ENCODE measurements at regions of chr1 and their contacts with region 1.

Region 1: GRCh38 chr1:21963477-21964217 is 13.2 kb upstream of the CELA3B start:
- DNase-seq: peak; percentile 57
- ATAC-seq: peak; percentile 88
- H3K4me3 ChIP-seq: no peak overlapping the region
- H3K27ac ChIP-seq: no peak overlapping the region
- H3K4me1 ChIP-seq: peaks cover 3% of the 10 kb centered on the region; the same call in 1 of the 2 replicates
- H3K27me3 ChIP-seq: no peaks in the 10 kb centered on the region
- CTCF ChIP-seq: peak; percentile 84
- POLR2A ChIP-seq: peak; percentile 30; the same call in 1 of the 2 replicates
- RAD21 ChIP-seq: peak; percentile 93

Region 2: DNA sequence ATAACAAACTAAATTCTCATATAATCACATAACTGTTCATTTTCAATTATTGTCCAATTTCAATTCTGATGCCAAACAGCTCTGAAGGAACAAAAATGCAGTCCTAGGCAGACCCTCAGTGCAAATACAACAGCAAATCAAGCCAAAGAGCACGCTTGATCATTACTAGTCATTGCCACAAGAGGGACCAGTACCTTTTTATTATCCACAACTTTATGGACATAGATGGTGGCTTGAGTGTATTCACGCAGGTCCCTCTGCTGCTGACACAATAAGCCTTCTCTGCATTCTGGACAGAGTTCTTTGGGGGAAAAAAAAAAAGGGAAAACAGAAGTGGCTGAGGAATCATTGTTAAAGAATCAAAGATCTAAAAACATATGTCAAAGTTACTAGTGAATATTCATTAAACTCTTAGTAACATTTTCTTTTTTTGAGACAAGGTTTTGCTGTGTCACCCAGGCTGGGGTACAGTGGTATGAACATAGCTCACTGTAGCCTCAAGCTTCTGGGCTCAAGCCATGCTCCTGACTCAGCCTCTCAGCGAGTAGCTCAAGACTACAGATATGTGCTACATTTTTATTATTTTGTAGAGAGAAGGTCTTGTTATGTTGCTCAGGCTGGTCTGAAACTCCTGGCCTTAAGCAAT is 260.2 kb before region 1 on chr1:
- CTCF ChIA-PET with region 1: no interaction called
- POLR2A ChIA-PET with region 1: no interaction called
- dilution Hi-C with region 1: no loop called
- in situ Hi-C with region 1: loop called (anchors 25 kb)
- intact Hi-C with region 1: loop called (anchors 10 kb)
- DNase-seq: peak; percentile 88
- ATAC-seq: peak; percentile 89
- H3K4me3 ChIP-seq: no peak overlapping the region
- H3K27ac ChIP-seq: no peak overlapping the region
- H3K4me1 ChIP-seq: peaks cover 10% of the 10 kb centered on the region
- H3K27me3 ChIP-seq: no peaks in the 10 kb centered on the region
- CTCF ChIP-seq: peak; percentile 40
- POLR2A ChIP-seq: no peak
- RAD21 ChIP-seq: peak; percentile 27

Region 3: DNA sequence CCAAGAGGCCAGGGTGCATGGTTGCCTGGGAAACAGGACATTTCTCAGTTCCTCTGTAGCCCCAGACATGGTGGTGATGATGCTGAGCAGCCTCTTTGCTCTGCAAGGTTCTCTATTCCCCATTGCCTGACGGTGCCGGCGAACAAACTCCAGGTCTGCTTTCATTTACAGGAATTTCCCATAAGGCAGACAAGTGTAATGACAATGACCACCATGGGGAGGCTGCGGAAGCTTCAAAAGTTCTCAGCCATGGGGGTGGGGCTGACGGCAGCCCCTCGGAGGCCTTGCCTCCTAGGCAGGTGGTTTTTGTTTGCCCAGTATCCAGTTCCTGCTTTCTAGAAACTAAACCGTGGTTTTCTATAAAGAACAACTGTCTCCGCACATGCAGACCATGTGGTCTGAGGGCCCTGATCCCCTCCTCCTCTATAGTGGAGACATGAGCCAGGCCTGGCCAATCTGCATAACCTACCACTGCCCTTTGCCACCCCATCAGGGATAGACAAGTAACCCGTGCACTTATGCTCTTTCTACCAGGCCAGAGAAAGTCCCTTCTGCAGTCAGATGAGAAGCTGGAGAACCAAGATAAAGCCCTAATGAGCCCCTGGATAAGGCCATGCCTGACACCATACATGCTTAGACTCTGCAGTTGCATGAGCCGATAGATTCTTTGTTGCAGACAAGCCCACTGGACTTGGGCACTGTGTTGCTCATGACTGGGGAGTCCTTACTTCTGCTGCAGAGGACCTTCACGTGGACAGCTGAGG is 97.5 kb before region 1 on chr1:
- CTCF ChIA-PET with region 1: no interaction called
- POLR2A ChIA-PET with region 1: no interaction called
- dilution Hi-C with region 1: no loop called
- in situ Hi-C with region 1: no loop called
- intact Hi-C with region 1: loop called (anchors 2 kb)
- DNase-seq: no peak
- ATAC-seq: no peak
- H3K4me3 ChIP-seq: no peak overlapping the region
- H3K27ac ChIP-seq: no peak overlapping the region
- H3K4me1 ChIP-seq: peaks cover 17% of the 10 kb centered on the region
- H3K27me3 ChIP-seq: no peaks in the 10 kb centered on the region
- CTCF ChIP-seq: no peak
- POLR2A ChIP-seq: no peak
- RAD21 ChIP-seq: no peak

Region 4: GRCh38 chr1:21919520-21919919 is 44.1 kb before region 1 on chr1:
- CTCF ChIA-PET with region 1: no interaction called
- POLR2A ChIA-PET with region 1: no interaction called
- dilution Hi-C with region 1: no loop called
- in situ Hi-C with region 1: no loop called
- intact Hi-C with region 1: loop called (anchors 5 kb)
- DNase-seq: peak; percentile 86
- ATAC-seq: peak; percentile 64
- H3K4me3 ChIP-seq: no peak overlapping the region
- H3K27ac ChIP-seq: peak overlapping the region; percentile 59; the same call in 1 of the 2 replicates
- H3K4me1 ChIP-seq: peaks cover 35% of the 10 kb centered on the region
- H3K27me3 ChIP-seq: no peaks in the 10 kb centered on the region
- CTCF ChIP-seq: no peak
- POLR2A ChIP-seq: no peak
- RAD21 ChIP-seq: no peak